Aorta (tissue), 5 donors: ENCODE measurements at regions of chr1 and their contacts with region 1.

Region 1: GRCh38 chr1:26602378-26602959 is 72.9 kb downstream of the RPS6KA1 start:
- DNase-seq: no peak
- ATAC-seq: peak; percentile 70
- H3K4me3 ChIP-seq: peak overlapping the region in 1 of 2 donors; percentile 10
- H3K27ac ChIP-seq: no peak overlapping the region
- H3K4me1 ChIP-seq: no peaks in the 10 kb centered on the region
- H3K27me3 ChIP-seq: no peaks in the 10 kb centered on the region

Region 2: GRCh38 chr1:26787706-26788514 is 185.4 kb after region 1 on chr1 and contains the start of gene PIGV:
- intact Hi-C with region 1: loop called (anchors 1 kb)
- DNase-seq: peak; percentile 93 to 96
- ATAC-seq: peak; percentile 93
- H3K4me3 ChIP-seq: peak within 1 kb of the TSS; percentile 48 to 71
- H3K27ac ChIP-seq: peak within 1 kb of the TSS; percentile 91 to 100
- H3K4me1 ChIP-seq: peaks cover 0 to 2% of the 10 kb centered on the region in 2 donors
- H3K27me3 ChIP-seq: no peaks in the 10 kb centered on the region
- total RNA-seq, gene PIGV: 6.8 to 10.3 TPM

Region 3: DNA sequence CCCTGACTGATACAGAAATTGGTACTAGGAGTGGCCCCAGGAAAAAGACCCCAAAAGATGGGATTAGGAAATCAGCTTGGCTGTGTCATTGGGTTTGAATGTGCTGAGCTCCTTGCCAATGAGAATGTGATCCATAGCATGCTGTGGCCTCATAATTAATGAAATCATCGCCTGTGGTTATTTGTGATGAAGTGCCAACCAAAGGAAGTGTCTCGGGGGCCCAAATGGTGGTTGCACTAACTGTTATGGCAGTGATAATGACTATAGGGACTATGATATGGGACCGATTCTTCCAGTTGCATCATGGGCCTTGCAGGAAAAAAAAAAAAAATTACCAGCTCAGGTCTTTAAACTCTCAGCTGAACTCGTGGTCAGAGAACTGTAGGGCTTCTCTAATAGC is 208.6 kb after region 1 on chr1:
- intact Hi-C with region 1: no loop called
- DNase-seq: no peak
- ATAC-seq: no peak
- H3K4me3 ChIP-seq: no peak overlapping the region
- H3K27ac ChIP-seq: no peak overlapping the region
- H3K4me1 ChIP-seq: no peaks in the 10 kb centered on the region
- H3K27me3 ChIP-seq: no peaks in the 10 kb centered on the region